GM12878 (cell line): ENCODE measurements at regions of chr12 and their contacts with region 1.

Region 1: GRCh38 chr12:122860346-122861090 is 25.3 kb downstream of the HIP1R start:
- DNase-seq: no peak
- ATAC-seq: peak; percentile 85
- H3K4me3 ChIP-seq: no peak overlapping the region
- H3K27ac ChIP-seq: no peak overlapping the region
- H3K4me1 ChIP-seq: no peaks in the 10 kb centered on the region
- H3K27me3 ChIP-seq: no peaks in the 10 kb centered on the region
- CTCF ChIP-seq: peak; percentile 87 to 93 (median 91)
- EP300 ChIP-seq: no peak
- POLR2A ChIP-seq: no peak
- RAD21 ChIP-seq: peak; percentile 99

Region 2: DNA sequence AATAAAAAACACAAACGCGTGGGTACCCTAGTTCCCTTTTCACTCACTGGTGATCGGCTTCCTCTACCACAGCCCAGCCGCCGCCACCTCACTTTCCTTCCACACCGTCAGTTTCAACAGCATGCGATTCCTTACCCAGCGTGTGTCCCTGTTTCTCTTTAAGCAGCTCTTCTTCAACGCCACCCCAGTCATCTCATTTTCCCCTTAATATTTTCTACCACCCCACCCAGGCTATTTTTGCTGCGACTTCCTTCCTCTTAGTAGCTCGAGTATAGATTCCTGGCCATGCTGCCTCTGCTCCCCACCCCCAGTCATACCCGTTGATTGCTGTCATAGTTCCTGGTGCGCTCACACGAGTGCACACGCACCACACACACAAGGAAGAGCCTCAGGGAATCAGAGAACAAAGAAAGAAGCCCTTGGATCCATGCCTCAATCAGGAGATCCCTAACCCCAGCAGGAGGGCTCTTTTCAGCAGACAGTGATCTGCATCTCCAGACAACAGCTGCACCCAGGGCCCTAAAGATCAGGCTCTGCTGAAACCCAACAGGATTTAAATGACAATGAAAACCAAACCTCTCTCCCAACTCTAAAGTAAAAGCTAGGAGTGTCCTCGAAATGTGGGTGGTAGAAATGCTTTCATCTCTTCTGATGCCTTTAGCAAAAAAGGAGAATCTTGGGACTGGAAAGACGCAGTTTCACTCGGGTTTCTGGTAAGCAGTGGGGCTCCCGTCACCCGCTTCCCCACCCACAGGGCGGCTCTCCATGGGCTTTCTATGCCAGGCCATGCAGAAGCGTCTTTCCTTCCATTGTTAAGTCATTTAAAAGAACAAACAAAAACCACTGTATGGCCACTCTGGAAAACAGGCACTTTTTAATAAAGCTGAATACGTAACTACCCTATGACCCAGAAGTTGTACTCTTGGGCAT is 11.6 kb after region 1 on chr12:
- CTCF ChIA-PET with region 1: interaction called, 14 read pairs
- POLR2A ChIA-PET with region 1: no interaction called
- RAD21 ChIA-PET with region 1: interaction called, 8 read pairs
- SMC1A ChIA-PET with region 1: interaction called, 5 read pairs
- in situ Hi-C with region 1: no loop called
- intact Hi-C with region 1: no loop called
- DNase-seq: peak; percentile 52
- ATAC-seq: peak; percentile 52
- H3K4me3 ChIP-seq: peak overlapping the region; percentile 57; the same call in 1 of the 2 replicates
- H3K27ac ChIP-seq: peak overlapping the region; percentile 64
- H3K4me1 ChIP-seq: peaks cover 45% of the 10 kb centered on the region
- H3K27me3 ChIP-seq: no peaks in the 10 kb centered on the region
- CTCF ChIP-seq: no peak
- EP300 ChIP-seq: no peak
- POLR2A ChIP-seq: 0 out of 2 replicates have a peak, but pooled peaks have one; percentile 17
- RAD21 ChIP-seq: no peak

Region 3: GRCh38 chr12:122888232-122888867 is 27.8 kb after region 1 on chr12:
- CTCF ChIA-PET with region 1: interaction called, 26 read pairs
- POLR2A ChIA-PET with region 1: no interaction called
- RAD21 ChIA-PET with region 1: interaction called, 8 read pairs
- SMC1A ChIA-PET with region 1: interaction called, 5 read pairs
- in situ Hi-C with region 1: no loop called
- intact Hi-C with region 1: no loop called
- DNase-seq: no peak
- ATAC-seq: peak; percentile 63
- H3K4me3 ChIP-seq: peak overlapping the region; percentile 51
- H3K27ac ChIP-seq: peak overlapping the region; percentile 71
- H3K4me1 ChIP-seq: peaks cover 36% of the 10 kb centered on the region
- H3K27me3 ChIP-seq: no peaks in the 10 kb centered on the region
- CTCF ChIP-seq: no peak
- EP300 ChIP-seq: no peak
- POLR2A ChIP-seq: peak; percentile 48
- RAD21 ChIP-seq: no peak

Region 4: DNA sequence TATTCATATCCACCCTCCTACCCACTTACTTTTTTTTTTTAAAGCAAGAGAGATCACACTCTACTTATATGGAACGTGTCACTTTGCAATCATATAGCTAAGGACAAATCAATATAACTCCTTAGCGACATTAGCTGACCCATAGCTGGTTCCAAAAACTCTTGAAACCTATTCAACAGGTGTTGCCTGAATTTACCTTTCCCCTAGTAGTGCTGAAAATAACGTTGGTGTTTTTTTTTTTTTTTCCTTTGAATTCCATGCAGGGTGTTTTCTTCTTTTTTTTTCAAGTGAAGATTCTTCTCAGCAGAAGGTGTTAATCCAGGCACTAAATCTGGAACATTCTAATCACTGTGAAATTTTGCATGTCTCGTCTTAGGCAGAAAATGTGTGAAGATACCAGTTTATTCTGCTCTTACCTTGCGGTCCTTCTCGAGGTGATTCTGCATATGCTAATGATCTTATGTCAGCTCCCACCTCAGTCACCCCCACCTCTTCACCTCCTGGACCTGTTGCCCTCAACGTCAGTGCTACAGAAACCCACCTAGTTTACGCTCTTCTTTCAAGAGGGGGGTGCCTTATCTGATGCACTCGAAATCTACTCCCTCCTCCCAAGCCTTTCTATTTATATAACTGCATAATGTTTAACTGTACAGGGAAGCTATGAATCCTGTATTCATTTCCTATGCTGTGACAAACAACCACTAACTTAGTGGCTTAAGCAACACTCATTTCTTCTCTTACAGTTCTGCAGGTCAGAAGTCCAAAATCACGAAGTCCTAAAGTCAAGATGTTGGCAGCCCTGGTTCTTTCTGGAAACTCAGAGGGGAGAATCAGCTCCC is 42.6 kb after region 1 on chr12:
- CTCF ChIA-PET with region 1: interaction called, 7 read pairs
- POLR2A ChIA-PET with region 1: no interaction called
- RAD21 ChIA-PET with region 1: interaction called, 13 read pairs
- SMC1A ChIA-PET with region 1: interaction called, 10 read pairs
- in situ Hi-C with region 1: no loop called
- intact Hi-C with region 1: no loop called
- DNase-seq: no peak
- ATAC-seq: no peak
- H3K4me3 ChIP-seq: no peak overlapping the region
- H3K27ac ChIP-seq: no peak overlapping the region
- H3K4me1 ChIP-seq: peaks cover 35% of the 10 kb centered on the region
- H3K27me3 ChIP-seq: no peaks in the 10 kb centered on the region
- CTCF ChIP-seq: no peak
- EP300 ChIP-seq: no peak
- POLR2A ChIP-seq: no peak
- RAD21 ChIP-seq: no peak

Region 5: DNA sequence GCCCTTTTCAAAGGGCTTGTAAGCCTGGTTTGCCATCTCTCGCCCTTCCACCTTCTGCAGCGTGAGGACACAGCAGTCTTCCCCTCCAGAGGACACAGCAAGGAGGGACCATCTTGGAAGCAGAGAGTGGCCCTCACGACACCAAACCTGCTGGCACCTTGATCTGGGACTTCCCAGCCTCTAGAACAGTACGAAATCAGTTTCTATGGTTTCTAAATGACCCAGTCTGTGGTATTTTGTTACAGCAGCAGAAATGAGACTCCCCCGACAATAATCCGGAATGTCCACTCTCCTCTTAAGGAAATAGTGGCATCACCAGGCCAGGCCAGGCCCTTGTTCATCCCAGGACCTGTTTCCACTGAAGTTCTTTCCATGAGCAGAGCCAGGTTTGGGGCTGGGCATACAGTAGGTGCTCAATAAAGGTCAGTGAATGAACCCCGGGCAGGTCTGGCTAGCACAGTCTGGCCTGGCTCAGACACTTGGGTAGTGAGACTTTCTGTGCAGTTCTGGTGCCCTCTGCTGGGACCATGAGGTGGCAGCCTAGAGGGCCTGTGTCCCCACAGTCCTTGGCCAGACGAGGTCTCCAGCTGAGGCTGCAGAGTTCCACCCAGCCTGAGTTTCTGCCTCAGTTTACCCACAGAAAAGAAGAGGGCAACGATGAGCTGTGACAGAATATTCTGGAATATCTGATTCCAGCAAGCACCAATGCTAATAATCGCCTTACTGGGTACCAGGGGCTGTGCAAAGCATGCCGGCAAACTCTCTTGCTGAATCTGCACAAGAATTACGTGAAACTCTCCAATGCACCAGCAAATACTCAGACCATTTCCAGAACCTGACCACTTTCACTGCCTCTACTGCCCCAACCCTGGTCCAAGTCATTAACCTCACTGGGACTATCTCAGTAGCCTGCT is 91.7 kb after region 1 on chr12:
- CTCF ChIA-PET with region 1: interaction called, 127 read pairs
- POLR2A ChIA-PET with region 1: no interaction called
- RAD21 ChIA-PET with region 1: interaction called, 72 read pairs
- SMC1A ChIA-PET with region 1: interaction called, 100 read pairs
- in situ Hi-C with region 1: loop called (anchors 5 kb)
- intact Hi-C with region 1: loop called (anchors 1 kb)
- DNase-seq: no peak
- ATAC-seq: peak; percentile 97
- H3K4me3 ChIP-seq: no peak overlapping the region
- H3K27ac ChIP-seq: no peak overlapping the region
- H3K4me1 ChIP-seq: peaks cover 20% of the 10 kb centered on the region
- H3K27me3 ChIP-seq: no peaks in the 10 kb centered on the region
- CTCF ChIP-seq: peak; percentile 92 to 97 (median 95)
- EP300 ChIP-seq: no peak
- POLR2A ChIP-seq: no peak
- RAD21 ChIP-seq: peak; percentile 98